ENCODE measurements at regions of chr12 and their contacts with region 1.

Region 1: GRCh38 chr12:12786716-12787601 is 1.5 kb downstream of the APOLD1 start:
- H3K4me3 ChIP-seq: peak overlapping the region; percentile 44
- H3K27ac ChIP-seq: peak overlapping the region; percentile 72; the same call in 1 of the 2 replicates
- H3K4me1 ChIP-seq: peaks cover 26% of the 10 kb centered on the region
- CTCF ChIP-seq: no peak

Region 2: DNA sequence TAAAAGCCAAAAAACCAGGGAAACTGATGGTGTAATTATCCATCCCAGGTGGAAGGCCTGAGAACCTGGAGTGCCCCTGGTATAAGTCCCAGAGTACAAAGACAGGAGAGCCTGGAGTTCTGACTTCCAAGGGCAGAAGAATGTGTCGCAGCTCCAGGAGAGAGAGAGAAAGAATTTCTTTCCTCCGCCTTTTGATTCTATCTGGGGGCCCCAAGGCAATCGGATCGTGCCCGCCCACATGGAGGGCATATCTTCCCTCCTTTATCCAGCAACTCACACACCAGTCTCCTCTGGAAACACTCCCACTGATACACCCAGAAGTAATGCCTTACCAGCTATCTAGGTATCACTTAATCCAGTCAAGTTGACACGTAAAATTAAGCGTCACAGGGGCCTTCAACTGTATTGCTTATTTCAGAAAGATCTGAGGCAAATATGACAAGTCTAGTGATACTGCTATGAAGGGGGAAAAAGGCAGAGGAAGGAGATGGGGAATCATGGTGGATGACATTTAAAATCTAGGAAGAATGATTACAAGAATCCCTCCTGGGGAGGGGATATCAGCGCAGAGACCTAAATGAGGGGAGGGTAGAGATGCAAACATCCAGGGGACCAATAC is 489.6 kb before region 1 on chr12:
- CTCF ChIA-PET with region 1: no interaction called
- POLR2A ChIA-PET with region 1: no interaction called
- H3K4me3 ChIP-seq: no peak overlapping the region
- H3K27ac ChIP-seq: no peak overlapping the region
- H3K4me1 ChIP-seq: no peaks in the 10 kb centered on the region
- CTCF ChIP-seq: no peak

Region 3: GRCh38 chr12:12384571-12385340 is 402.2 kb before region 1 on chr12:
- CTCF ChIA-PET with region 1: no interaction called
- POLR2A ChIA-PET with region 1: no interaction called
- H3K4me3 ChIP-seq: no peak overlapping the region
- H3K27ac ChIP-seq: no peak overlapping the region
- H3K4me1 ChIP-seq: 0 out of 2 replicates have a peak, but pooled peaks cover 2% of the 10 kb centered on the region
- CTCF ChIP-seq: no peak

Region 4: DNA sequence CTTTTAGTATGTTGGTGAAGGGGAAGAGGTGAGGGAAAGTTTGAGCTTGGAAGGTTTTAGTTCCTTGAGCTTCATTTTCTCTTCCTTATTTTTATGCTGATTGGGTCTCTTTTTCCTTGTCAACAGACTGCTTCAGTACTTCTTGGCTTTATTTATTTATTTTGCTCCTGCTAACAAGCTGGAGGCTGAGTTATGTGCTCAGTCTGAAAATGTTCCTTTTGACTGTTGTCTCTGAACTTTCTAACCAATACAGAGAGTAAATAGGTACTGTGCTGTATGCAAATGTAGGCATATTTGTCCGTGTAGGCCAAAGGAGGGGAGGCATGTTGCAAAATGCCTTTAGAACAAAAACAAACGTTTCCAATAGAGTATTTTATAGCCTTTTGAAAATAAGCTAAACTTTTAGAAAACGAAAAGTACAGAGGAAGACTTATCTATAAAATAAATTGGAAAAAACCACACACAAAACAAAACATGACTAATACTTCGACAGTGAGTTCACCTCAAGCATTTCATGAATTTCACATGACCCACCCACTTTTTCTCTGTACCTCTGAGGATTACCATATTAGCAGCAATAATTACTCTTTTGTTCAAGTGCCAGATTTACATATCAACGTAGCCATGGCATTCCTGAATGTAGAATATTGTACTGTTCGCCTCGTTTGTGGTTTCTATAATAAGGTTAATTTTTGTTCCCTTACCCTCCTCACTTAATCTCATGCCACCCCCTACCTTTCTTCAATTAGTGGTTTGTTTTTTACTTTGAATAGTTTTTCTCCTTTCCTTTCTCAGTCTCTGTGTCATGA is 180.0 kb before region 1 on chr12:
- CTCF ChIA-PET with region 1: no interaction called
- POLR2A ChIA-PET with region 1: no interaction called
- H3K4me3 ChIP-seq: no peak overlapping the region
- H3K27ac ChIP-seq: no peak overlapping the region
- H3K4me1 ChIP-seq: peaks cover 3% of the 10 kb centered on the region; the same call in 1 of the 2 replicates
- CTCF ChIP-seq: no peak

Region 5: GRCh38 chr12:12736759-12737676 is 49.9 kb before region 1 on chr12:
- CTCF ChIA-PET with region 1: interaction called, 13 read pairs
- POLR2A ChIA-PET with region 1: interaction called, 3 read pairs
- H3K4me3 ChIP-seq: no peak overlapping the region
- H3K27ac ChIP-seq: peak overlapping the region; percentile 53
- H3K4me1 ChIP-seq: peaks cover 32% of the 10 kb centered on the region
- CTCF ChIP-seq: no peak

Region 6: GRCh38 chr12:12813120-12814101 is 26.5 kb after region 1 on chr12 and contains the start of gene DDX47:
- CTCF ChIA-PET with region 1: interaction called, 27 read pairs
- POLR2A ChIA-PET with region 1: interaction called, 4 read pairs
- H3K4me3 ChIP-seq: peak within 1 kb of the TSS; percentile 85
- H3K27ac ChIP-seq: peak within 1 kb of the TSS; percentile 59
- H3K4me1 ChIP-seq: peaks cover 6% of the 10 kb centered on the region
- CTCF ChIP-seq: peak; percentile 96

Region 7: DNA sequence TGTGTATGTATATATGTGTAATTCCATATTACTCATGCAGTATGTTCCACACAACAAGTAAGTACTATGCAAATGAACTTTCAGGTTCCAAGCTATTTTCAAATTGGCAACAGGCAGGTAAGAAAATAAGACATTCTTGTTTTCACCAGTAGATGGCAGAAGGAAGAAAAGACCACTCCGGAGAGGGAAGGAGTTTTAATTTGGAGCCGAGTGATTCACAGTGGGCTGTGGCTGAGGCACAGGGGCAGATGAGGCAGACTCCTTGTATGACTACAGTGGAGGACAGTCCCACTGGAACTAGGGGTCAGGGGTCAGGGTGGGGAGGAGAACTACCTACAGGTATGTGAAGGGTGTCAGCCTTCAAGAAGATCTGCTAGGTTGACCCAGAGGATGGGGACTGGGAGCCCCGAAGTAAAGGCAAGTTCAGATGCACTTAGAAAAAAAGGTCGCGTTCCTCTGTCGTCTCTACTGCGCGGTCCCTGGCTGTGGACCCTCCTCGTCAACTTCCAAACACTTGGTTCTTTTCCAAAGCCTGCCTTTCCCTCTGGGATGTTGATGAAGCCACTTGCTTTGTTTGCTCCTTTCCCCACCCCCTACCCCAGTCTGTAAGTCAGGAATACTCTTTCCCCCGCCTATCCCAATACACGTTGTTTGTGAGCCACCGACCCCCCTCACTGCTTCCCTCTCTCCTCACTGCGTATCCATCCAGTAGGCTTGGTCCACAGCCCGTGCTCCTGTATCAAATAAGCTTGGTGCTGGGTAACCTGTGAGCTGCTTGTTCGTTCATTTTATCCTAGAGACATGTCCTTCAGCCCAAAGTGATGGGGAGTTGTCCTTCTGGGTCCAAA is 50.3 kb after region 1 on chr12:
- CTCF ChIA-PET with region 1: interaction called, 6 read pairs
- POLR2A ChIA-PET with region 1: interaction called, 12 read pairs
- H3K4me3 ChIP-seq: no peak overlapping the region
- H3K27ac ChIP-seq: peak overlapping the region; percentile 22; the same call in 1 of the 2 replicates
- H3K4me1 ChIP-seq: peaks cover 24% of the 10 kb centered on the region
- CTCF ChIP-seq: peak; percentile 31; the same call in 1 of the 2 replicates

Region 8: DNA sequence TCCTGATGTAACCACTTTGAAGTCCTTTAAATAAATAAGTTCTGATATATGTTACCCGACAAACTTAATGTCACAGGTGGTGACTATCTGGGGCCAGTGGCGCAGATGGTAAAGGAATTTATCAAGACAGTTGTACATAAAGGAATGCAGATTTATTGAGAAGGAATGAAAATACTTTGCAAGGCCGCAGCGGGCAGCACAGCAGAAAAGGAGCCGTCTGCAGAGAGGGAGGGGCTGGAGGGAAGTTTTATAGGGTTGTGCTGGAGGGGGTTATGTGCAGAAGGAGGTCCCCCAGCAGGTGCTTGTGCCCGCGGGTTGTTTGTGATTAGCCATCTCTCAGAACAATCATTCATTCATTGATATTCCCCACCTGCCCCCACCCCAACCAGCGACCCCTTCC is 147.6 kb after region 1 on chr12:
- CTCF ChIA-PET with region 1: interaction called, 10 read pairs
- POLR2A ChIA-PET with region 1: no interaction called
- H3K4me3 ChIP-seq: no peak overlapping the region
- H3K27ac ChIP-seq: no peak overlapping the region
- H3K4me1 ChIP-seq: no peaks in the 10 kb centered on the region
- CTCF ChIP-seq: no peak

Measured in HEK293 (cell line).